Activated CD8-positive, alpha-beta T cell treated with anti-CD3 and anti-CD28 coated beads for 36 hours (primary cell): ENCODE measurements at regions of chr17 and their contacts with region 1.

Region 1: DNA sequence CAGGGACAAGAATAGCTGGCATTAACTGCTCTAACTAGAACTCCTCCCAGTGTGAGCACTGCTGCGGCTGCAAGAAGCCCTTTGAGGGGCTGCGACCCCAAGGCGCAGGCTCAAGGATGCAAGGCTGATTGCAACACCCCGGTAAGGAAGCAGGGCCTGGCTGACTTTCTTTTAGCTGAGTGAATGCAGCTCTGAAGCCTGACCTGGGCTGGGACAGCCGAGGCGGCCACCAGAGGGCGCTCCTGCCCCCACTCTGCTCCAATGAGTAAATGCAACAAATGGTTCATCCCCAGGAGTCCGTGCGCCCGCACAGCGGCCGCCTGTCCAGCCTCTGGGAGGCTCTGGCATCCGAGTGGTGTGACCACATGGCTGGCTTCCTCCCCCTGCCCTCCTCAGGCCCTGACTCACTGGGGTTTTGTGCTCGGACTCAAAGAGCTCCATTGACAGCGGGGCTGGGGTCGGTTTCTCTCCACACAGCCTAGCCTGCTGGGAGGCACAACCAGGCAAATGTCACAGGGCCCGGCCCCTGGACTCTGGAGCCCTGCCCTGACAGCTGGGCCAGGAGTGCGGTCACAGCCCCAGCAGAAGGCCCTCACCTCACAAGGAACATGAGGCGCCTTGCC is at the start of gene SMIM5:
- DNase-seq: peak; percentile 88
- ATAC-seq: peak; percentile 93
- H3K4me3 Mint-ChIP-seq: no peak within 1 kb of the TSS
- H3K27ac Mint-ChIP-seq: no peak within 1 kb of the TSS
- H3K4me1 Mint-ChIP-seq: peaks cover 4% of the 10 kb centered on the region
- H3K27me3 Mint-ChIP-seq: no peaks in the 10 kb centered on the region
- CTCF ChIP-seq: peak; percentile 95
- total RNA-seq, gene SMIM5: 0.07 to 0.25 TPM

Region 2: GRCh38 chr17:75557075-75557882 is 75.7 kb before region 1 on chr17:
- CTCF ChIA-PET with region 1: no interaction called
- POLR2A ChIA-PET with region 1: no interaction called
- intact Hi-C with region 1: no loop called
- DNase-seq: no peak
- ATAC-seq: no peak
- H3K4me3 Mint-ChIP-seq: no peak overlapping the region
- H3K27ac Mint-ChIP-seq: no peak overlapping the region
- H3K4me1 Mint-ChIP-seq: no peaks in the 10 kb centered on the region
- H3K27me3 Mint-ChIP-seq: no peaks in the 10 kb centered on the region
- CTCF ChIP-seq: no peak

Region 3: GRCh38 chr17:75576661-75577060 is 56.3 kb before region 1 on chr17:
- CTCF ChIA-PET with region 1: interaction called, 12 read pairs
- POLR2A ChIA-PET with region 1: no interaction called
- intact Hi-C with region 1: no loop called
- DNase-seq: no peak
- ATAC-seq: no peak
- H3K4me3 Mint-ChIP-seq: no peak overlapping the region
- H3K27ac Mint-ChIP-seq: no peak overlapping the region
- H3K4me1 Mint-ChIP-seq: peaks cover 7% of the 10 kb centered on the region
- H3K27me3 Mint-ChIP-seq: no peaks in the 10 kb centered on the region
- CTCF ChIP-seq: no peak

Region 4: GRCh38 chr17:75619506-75620431 is 13.2 kb before region 1 on chr17:
- CTCF ChIA-PET with region 1: interaction called, 23 read pairs
- POLR2A ChIA-PET with region 1: no interaction called
- intact Hi-C with region 1: no loop called
- DNase-seq: peak; percentile 25
- ATAC-seq: no peak
- H3K4me3 Mint-ChIP-seq: no peak overlapping the region
- H3K27ac Mint-ChIP-seq: no peak overlapping the region
- H3K4me1 Mint-ChIP-seq: no peaks in the 10 kb centered on the region
- H3K27me3 Mint-ChIP-seq: no peaks in the 10 kb centered on the region
- CTCF ChIP-seq: no peak

Region 5: GRCh38 chr17:75661531-75661930 is 28.6 kb after region 1 on chr17:
- CTCF ChIA-PET with region 1: interaction called, 23 read pairs
- POLR2A ChIA-PET with region 1: interaction called, 6 read pairs
- intact Hi-C with region 1: no loop called
- DNase-seq: no peak
- ATAC-seq: no peak
- H3K4me3 Mint-ChIP-seq: no peak overlapping the region
- H3K27ac Mint-ChIP-seq: no peak overlapping the region
- H3K4me1 Mint-ChIP-seq: peaks cover 15% of the 10 kb centered on the region
- H3K27me3 Mint-ChIP-seq: no peaks in the 10 kb centered on the region
- CTCF ChIP-seq: no peak

Region 6: DNA sequence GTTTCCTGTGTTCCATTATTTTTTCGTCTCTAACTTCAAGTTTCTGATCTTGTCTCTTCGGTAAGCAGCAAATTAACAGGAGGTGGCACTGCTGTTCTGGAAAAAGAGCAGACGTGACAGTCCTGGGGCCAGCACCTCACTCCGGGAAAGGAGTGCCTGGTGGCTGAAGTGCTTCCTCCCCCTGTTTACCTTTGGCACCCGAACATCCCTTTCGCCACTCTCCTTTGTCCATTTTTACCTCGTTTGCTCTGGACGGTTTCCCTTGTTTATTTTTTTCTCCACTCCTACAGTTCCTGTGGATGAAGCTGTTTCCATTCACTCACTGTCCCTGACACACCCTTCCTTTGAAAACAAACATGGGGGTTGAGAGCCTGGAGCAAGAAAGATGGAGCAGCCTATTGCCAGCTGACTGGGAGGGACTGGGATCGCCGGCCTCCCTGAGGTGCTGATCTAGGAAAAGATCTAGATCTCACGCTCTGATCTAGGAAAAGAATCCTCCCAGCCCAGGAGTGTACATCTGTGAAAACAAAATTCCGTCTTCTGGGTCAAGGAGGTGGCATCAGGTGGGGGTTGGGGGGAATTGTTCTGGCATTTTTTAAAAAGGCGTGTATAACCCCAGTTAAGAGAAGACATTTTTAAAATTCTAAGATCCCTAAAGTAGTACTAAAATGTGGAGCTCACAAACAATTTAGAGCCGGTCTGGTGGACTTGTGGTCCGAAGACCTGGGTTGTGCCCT is 46.9 kb after region 1 on chr17:
- CTCF ChIA-PET with region 1: interaction called, 21 read pairs
- POLR2A ChIA-PET with region 1: no interaction called
- intact Hi-C with region 1: no loop called
- DNase-seq: no peak
- ATAC-seq: no peak
- H3K4me3 Mint-ChIP-seq: no peak overlapping the region
- H3K27ac Mint-ChIP-seq: peak overlapping the region; percentile 13
- H3K4me1 Mint-ChIP-seq: peaks cover 30% of the 10 kb centered on the region
- H3K27me3 Mint-ChIP-seq: no peaks in the 10 kb centered on the region
- CTCF ChIP-seq: no peak

Region 7: GRCh38 chr17:75720725-75721462 is 87.9 kb after region 1 on chr17 and contains the start of gene ITGB4:
- CTCF ChIA-PET with region 1: interaction called, 21 read pairs
- POLR2A ChIA-PET with region 1: no interaction called
- intact Hi-C with region 1: no loop called
- DNase-seq: peak; percentile 63
- ATAC-seq: peak; percentile 93
- H3K4me3 Mint-ChIP-seq: peak within 1 kb of the TSS; percentile 67
- H3K27ac Mint-ChIP-seq: no peak within 1 kb of the TSS
- H3K4me1 Mint-ChIP-seq: peaks cover 3% of the 10 kb centered on the region
- H3K27me3 Mint-ChIP-seq: peaks cover 9% of the 10 kb centered on the region
- CTCF ChIP-seq: peak; percentile 14
- total RNA-seq, gene ITGB4: 0.69 to 1.8 TPM